HepG2 (cell line): ENCODE measurements at regions of chr4 and their contacts with region 1.

Region 1: DNA sequence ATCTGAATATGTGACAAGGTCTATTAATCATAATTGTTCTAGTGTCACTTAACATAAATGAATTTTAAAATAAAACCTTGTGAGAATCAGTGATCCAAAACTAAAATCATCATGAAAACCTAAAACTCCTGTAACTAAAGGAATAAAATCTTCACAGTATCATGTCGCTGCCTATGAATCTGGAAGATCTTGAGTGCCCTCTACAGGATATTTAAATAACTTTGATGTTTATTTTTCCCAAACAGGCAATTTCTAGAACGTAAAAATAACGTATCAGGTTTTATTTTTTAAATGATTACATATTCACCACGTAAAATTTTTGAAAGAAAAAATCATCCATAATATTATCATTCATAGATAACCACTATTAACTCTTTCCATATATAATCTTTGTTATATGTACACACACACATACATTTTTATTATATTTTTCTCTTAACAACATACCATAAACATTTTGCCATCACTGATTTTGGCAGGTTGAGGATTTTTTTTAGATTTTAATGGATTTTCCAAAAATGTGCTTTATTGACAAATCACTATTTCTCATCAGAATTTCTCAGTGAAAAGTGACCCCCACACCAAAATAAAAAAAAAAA is 79.6 kb downstream of the COMMD8 start:
- DNase-seq: peak; percentile 7
- ATAC-seq: no peak
- H3K4me3 ChIP-seq: no peak overlapping the region
- H3K27ac ChIP-seq: no peak overlapping the region
- H3K4me1 ChIP-seq: no peaks in the 10 kb centered on the region
- H3K27me3 ChIP-seq: no peaks in the 10 kb centered on the region
- CTCF ChIP-seq: peak; percentile 49
- EP300 ChIP-seq: no peak
- POLR2A ChIP-seq: no peak
- RAD21 ChIP-seq: no peak

Region 2: GRCh38 chr4:46329118-46329976 is 1054.6 kb before region 1 on chr4:
- CTCF ChIA-PET with region 1: no interaction called
- POLR2A ChIA-PET with region 1: no interaction called
- in situ Hi-C with region 1: no loop called
- intact Hi-C with region 1: loop called (anchors 5 kb)
- DNase-seq: peak; percentile 46
- ATAC-seq: peak; percentile 95
- H3K4me3 ChIP-seq: no peak overlapping the region
- H3K27ac ChIP-seq: no peak overlapping the region
- H3K4me1 ChIP-seq: no peaks in the 10 kb centered on the region
- H3K27me3 ChIP-seq: no peaks in the 10 kb centered on the region
- CTCF ChIP-seq: peak; percentile 62
- EP300 ChIP-seq: no peak
- POLR2A ChIP-seq: no peak
- RAD21 ChIP-seq: no peak

Region 3: DNA sequence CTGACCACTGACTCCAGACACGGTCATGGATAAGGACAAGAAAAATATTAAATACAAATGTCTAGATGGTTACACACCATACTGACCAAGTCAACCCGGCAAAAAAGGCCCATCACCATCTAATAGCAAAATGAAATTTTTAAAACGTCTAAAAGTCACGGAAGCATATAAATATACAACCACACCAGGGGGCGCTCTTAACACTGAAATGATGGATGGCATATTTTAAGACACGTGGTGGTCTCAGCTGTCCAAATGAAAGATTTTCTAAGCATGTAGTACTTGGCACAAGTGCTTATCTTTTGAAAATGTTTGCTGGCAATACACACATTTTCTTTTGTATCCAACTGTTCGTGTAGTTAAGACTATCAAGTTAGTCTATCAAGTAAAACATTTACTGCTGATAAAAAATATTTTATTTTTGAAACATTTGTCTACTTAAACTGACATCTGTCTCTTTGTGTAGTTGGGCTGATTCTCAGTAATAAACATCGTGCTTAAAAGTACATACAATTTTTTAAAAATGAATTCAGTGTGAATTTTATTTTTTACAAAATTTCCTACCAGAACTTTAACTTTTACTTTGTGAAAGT is 539.5 kb before region 1 on chr4:
- CTCF ChIA-PET with region 1: interaction called, 4 read pairs
- POLR2A ChIA-PET with region 1: no interaction called
- in situ Hi-C with region 1: no loop called
- intact Hi-C with region 1: loop called (anchors 1 kb)
- DNase-seq: peak; percentile 50
- ATAC-seq: peak; percentile 60
- H3K4me3 ChIP-seq: no peak overlapping the region
- H3K27ac ChIP-seq: no peak overlapping the region
- H3K4me1 ChIP-seq: no peaks in the 10 kb centered on the region
- H3K27me3 ChIP-seq: no peaks in the 10 kb centered on the region
- CTCF ChIP-seq: peak; percentile 71
- EP300 ChIP-seq: no peak
- POLR2A ChIP-seq: no peak
- RAD21 ChIP-seq: peak; percentile 44; the same call in 1 of the 2 replicates

Region 4: GRCh38 chr4:46856333-46856732 is 527.6 kb before region 1 on chr4:
- CTCF ChIA-PET with region 1: no interaction called
- POLR2A ChIA-PET with region 1: no interaction called
- in situ Hi-C with region 1: loop called (anchors 25 kb)
- intact Hi-C with region 1: no loop called
- DNase-seq: no peak
- ATAC-seq: no peak
- H3K4me3 ChIP-seq: no peak overlapping the region
- H3K27ac ChIP-seq: no peak overlapping the region
- H3K4me1 ChIP-seq: no peaks in the 10 kb centered on the region
- H3K27me3 ChIP-seq: no peaks in the 10 kb centered on the region; a peak in 1 of 5 replicates
- CTCF ChIP-seq: no peak
- EP300 ChIP-seq: no peak
- POLR2A ChIP-seq: no peak
- RAD21 ChIP-seq: no peak

Region 5: GRCh38 chr4:46931981-46932380 is 451.9 kb before region 1 on chr4:
- CTCF ChIA-PET with region 1: no interaction called
- POLR2A ChIA-PET with region 1: no interaction called
- in situ Hi-C with region 1: no loop called
- intact Hi-C with region 1: loop called (anchors 5 kb)
- DNase-seq: peak; percentile 3
- ATAC-seq: peak; percentile 86
- H3K4me3 ChIP-seq: no peak overlapping the region
- H3K27ac ChIP-seq: no peak overlapping the region
- H3K4me1 ChIP-seq: 0 out of 2 replicates have a peak, but pooled peaks cover 9% of the 10 kb centered on the region
- H3K27me3 ChIP-seq: no peaks in the 10 kb centered on the region
- CTCF ChIP-seq: peak; percentile 58
- EP300 ChIP-seq: no peak
- POLR2A ChIP-seq: no peak
- RAD21 ChIP-seq: no peak

Region 6: DNA sequence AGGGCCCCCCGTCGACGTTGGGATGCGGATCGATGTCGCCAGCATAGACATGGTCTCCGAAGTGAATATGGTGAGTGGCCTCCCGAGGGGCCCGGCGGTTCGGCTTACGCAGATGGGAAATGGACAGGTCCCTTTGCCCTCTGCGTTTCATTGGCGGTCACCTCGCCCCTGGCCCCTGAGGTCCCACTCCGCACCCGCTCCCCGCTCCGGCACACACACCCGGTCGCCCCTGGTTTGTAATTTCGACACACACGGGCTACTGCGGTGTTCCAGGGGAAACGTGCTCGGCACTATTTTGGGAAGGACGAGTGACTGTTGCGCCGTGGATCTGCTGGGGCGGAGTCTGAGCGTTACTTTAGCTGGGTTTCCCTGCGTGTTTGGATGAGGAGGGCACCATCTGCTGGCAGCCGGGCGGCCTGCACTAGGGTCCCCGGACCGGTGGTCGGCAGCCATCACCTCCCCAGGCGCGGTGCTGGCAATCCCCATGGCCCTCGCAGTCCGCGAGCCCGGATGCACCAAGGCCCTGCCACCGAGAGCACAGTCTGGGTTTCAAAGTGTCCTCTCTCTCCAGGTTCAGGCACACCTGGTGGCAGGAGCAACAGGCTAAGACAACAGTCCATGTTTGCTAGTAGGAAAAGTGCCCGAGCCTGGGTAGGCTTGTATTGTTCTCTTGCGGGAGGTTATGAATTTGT is 351.4 kb before region 1 on chr4:
- CTCF ChIA-PET with region 1: no interaction called
- POLR2A ChIA-PET with region 1: no interaction called
- in situ Hi-C with region 1: no loop called
- intact Hi-C with region 1: loop called (anchors 10 kb)
- DNase-seq: peak; percentile 37
- ATAC-seq: peak; percentile 99
- H3K4me3 ChIP-seq: peak overlapping the region; percentile 51 to 73 (median 51)
- H3K27ac ChIP-seq: no peak overlapping the region
- H3K4me1 ChIP-seq: peaks cover 16% of the 10 kb centered on the region
- H3K27me3 ChIP-seq: peaks cover 0 to 9% of the 10 kb centered on the region in 2 experiments; a peak in 2 of 5 replicates
- CTCF ChIP-seq: peak; percentile 94
- EP300 ChIP-seq: no peak
- POLR2A ChIP-seq: no peak
- RAD21 ChIP-seq: peak; percentile 70

Region 7: DNA sequence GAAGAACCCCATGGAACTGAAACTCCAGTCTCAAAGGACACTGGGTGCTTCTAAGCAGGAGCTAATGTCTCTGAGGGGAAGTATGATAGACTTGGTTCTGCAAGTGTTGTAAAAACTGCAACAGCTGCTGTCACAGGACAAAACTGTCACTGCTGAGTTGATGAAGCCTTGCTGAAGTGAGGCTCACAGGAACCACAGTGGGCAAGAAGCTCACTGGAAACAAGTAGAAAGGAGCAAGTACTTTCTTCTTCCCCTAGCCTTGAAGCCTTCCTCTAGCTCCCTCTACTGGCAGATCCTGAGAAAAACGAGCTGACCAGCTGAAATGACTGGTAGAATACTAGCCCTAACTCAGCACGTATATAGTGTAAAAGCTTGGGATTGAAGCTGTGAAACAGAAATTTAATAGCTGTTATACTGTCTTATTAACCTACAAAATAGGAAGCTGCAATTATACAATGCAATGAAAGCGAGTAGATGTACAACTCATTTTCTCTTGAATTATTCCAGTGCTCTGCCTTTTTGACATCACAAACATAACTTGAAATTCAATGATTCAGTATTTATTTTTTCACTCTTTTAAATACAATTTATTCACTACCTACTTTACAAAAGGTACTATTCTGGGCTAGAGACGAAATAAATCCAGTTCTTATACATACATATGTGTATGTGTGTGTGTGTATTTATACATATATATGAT is 261.2 kb before region 1 on chr4:
- CTCF ChIA-PET with region 1: no interaction called
- POLR2A ChIA-PET with region 1: no interaction called
- in situ Hi-C with region 1: no loop called
- intact Hi-C with region 1: loop called (anchors 5 kb)
- DNase-seq: peak; percentile 63
- ATAC-seq: peak; percentile 93
- H3K4me3 ChIP-seq: no peak overlapping the region
- H3K27ac ChIP-seq: no peak overlapping the region
- H3K4me1 ChIP-seq: no peaks in the 10 kb centered on the region
- H3K27me3 ChIP-seq: no peaks in the 10 kb centered on the region
- CTCF ChIP-seq: peak; percentile 81
- EP300 ChIP-seq: no peak
- POLR2A ChIP-seq: no peak
- RAD21 ChIP-seq: no peak

Region 8: GRCh38 chr4:47692639-47693180 is 308.8 kb after region 1 on chr4:
- CTCF ChIA-PET with region 1: no interaction called
- POLR2A ChIA-PET with region 1: no interaction called
- in situ Hi-C with region 1: no loop called
- intact Hi-C with region 1: no loop called
- DNase-seq: no peak
- ATAC-seq: no peak
- H3K4me3 ChIP-seq: no peak overlapping the region
- H3K27ac ChIP-seq: no peak overlapping the region
- H3K4me1 ChIP-seq: no peaks in the 10 kb centered on the region; the same call in 1 of the 2 replicates
- H3K27me3 ChIP-seq: no peaks in the 10 kb centered on the region
- CTCF ChIP-seq: no peak
- EP300 ChIP-seq: no peak
- POLR2A ChIP-seq: no peak
- RAD21 ChIP-seq: no peak